Panc1 (cell line): ENCODE measurements at regions of chr4 and their contacts with region 1.

Region 1: GRCh38 chr4:70687821-70688794 is at the start of gene UTP3:
- DNase-seq: peak; percentile 99
- ATAC-seq: peak; percentile 98
- H3K4me3 ChIP-seq: peak within 1 kb of the TSS; percentile 63 to 92
- H3K27ac ChIP-seq: peak within 1 kb of the TSS; percentile 93
- H3K4me1 ChIP-seq: peaks cover 13% of the 10 kb centered on the region; the same call in 1 of the 2 replicates
- H3K27me3 ChIP-seq: no peaks in the 10 kb centered on the region
- CTCF ChIP-seq: peak; percentile 93
- total RNA-seq, gene UTP3: 20.6 TPM

Region 2: GRCh38 chr4:70704331-70705145 is 16.4 kb after region 1 on chr4:
- CTCF ChIA-PET with region 1: no interaction called
- POLR2A ChIA-PET with region 1: interaction called, 4 read pairs
- in situ Hi-C with region 1: no loop called
- intact Hi-C with region 1: loop called (anchors 2 kb)
- DNase-seq: no peak
- ATAC-seq: peak; percentile 89
- H3K4me3 ChIP-seq: peak overlapping the region; percentile 67 to 82
- H3K27ac ChIP-seq: peak overlapping the region; percentile 87
- H3K4me1 ChIP-seq: peaks cover 17% of the 10 kb centered on the region
- H3K27me3 ChIP-seq: no peaks in the 10 kb centered on the region
- CTCF ChIP-seq: peak; percentile 71